ENCODE measurements at regions of chr19 and their contacts with region 1.

Region 1: DNA sequence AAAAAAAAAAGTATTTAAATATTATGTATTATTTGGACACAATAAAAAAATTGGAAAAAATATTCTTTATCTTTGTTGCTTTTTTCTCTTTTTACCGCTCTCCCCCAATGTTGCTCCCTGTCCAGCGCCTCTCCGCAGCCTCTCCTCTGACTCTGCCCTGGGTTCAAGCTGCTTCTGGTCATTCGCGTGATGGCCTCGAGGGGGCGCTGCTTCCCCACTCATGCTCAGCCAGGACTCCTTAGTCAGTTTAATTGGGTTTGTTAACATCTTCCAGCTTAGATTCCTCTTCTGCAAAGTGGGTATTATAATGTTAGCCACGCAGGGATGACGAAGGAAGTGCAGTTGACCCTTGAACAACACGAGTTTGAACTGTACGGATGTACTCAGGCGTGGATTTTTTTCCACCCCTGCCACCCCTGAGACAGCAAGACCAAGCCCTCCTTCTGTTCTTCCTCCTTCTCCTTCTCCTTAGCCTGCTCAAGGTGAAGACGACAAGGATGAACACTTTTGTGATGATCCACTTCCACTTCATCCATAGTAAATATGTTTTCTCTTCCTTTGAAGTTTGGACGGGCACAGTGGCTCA is 4.9 kb upstream of the NWD1 start:
- DNase-seq: peak; percentile 77
- ATAC-seq: peak; percentile 19
- H3K4me3 ChIP-seq: no peak overlapping the region
- H3K4me3 Mint-ChIP-seq: peak overlapping the region; percentile 54
- H3K27ac ChIP-seq: peak overlapping the region in 1 of 2 donors; percentile 8
- H3K27ac Mint-ChIP-seq: peak overlapping the region; percentile 80
- H3K4me1 ChIP-seq: peaks cover 43 to 68% of the 10 kb centered on the region in 2 donors
- H3K4me1 Mint-ChIP-seq: peaks cover 42% of the 10 kb centered on the region
- H3K27me3 ChIP-seq: no peaks in the 10 kb centered on the region
- H3K27me3 Mint-ChIP-seq: no peaks in the 10 kb centered on the region
- CTCF ChIP-seq: peak; percentile 96

Region 2: GRCh38 chr19:16702118-16702517 is 12.7 kb before region 1 on chr19:
- CTCF ChIA-PET with region 1: interaction called, 14 read pairs
- POLR2A ChIA-PET with region 1: interaction called, 8 read pairs
- intact Hi-C with region 1: no loop called
- DNase-seq: no peak
- ATAC-seq: no peak
- H3K4me3 ChIP-seq: no peak overlapping the region
- H3K4me3 Mint-ChIP-seq: no peak overlapping the region
- H3K27ac ChIP-seq: no peak overlapping the region
- H3K27ac Mint-ChIP-seq: no peak overlapping the region
- H3K4me1 ChIP-seq: no peaks in the 10 kb centered on the region
- H3K4me1 Mint-ChIP-seq: no peaks in the 10 kb centered on the region
- H3K27me3 ChIP-seq: no peaks in the 10 kb centered on the region
- H3K27me3 Mint-ChIP-seq: no peaks in the 10 kb centered on the region
- CTCF ChIP-seq: no peak

Region 3: DNA sequence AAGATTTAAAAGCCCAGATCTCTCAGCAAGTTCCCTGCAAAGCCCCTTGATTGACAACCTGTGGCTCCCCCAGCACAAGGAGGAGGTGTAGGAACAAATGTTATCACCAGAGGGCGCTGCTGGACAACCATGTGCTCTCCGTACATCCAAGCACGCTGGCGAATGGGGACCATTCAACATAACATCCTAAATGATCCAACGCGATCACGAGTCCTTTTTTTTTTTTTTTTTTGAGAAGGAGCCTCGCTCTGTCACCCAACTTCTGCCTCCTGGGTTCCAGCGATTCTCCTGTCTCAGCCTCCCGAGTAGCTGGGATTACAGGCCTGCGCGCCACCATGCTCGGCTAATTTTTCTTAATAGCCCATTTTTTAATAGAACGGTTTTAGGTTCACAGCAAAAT is 56.8 kb after region 1 on chr19:
- CTCF ChIA-PET with region 1: interaction called, 34 read pairs
- POLR2A ChIA-PET with region 1: no interaction called
- intact Hi-C with region 1: loop called (anchors 1 kb)
- DNase-seq: peak; percentile 85
- ATAC-seq: peak; percentile 86
- H3K4me3 ChIP-seq: no peak overlapping the region
- H3K4me3 Mint-ChIP-seq: no peak overlapping the region
- H3K27ac ChIP-seq: no peak overlapping the region
- H3K27ac Mint-ChIP-seq: no peak overlapping the region
- H3K4me1 ChIP-seq: no peaks in the 10 kb centered on the region
- H3K4me1 Mint-ChIP-seq: peaks cover 3% of the 10 kb centered on the region
- H3K27me3 ChIP-seq: peaks cover 0 to 5% (median 1%) of the 10 kb centered on the region in 4 experiments
- H3K27me3 Mint-ChIP-seq: peaks cover 17% of the 10 kb centered on the region
- CTCF ChIP-seq: peak; percentile 86

Region 4: DNA sequence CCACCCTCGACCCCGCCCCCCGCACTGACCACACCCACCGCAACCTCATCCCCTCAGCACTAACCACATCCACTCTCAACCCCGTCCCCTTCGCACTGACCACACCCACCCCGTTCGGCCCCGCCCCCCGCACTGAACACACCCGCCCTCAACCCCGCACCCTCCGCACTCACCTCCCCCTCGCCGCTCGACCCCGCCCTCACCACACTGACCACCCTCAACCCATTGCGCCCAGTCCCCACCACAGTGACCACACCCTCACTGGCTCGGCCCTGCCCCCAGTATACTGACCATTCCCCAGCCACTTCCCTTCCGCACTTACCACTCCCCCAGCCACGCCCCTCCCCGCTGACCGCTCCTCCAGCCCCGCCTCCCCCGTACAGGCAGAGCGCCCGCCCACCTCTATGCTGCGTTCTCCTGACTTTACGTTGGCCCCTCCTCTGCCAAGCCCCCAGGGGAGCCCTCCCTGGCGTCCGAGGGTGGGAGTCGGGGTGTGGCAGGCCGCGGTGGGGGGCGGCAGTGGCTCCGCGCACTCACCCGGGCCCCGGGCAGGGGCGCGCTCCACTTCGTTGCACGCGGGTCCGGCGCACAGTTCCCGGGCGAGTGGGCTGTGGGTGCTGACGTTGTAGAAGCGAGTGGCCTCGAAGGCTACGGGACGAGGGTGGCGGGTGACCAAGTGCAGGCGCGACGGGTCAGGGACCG is 182.5 kb after region 1 on chr19:
- CTCF ChIA-PET with region 1: interaction called, 6 read pairs
- POLR2A ChIA-PET with region 1: no interaction called
- intact Hi-C with region 1: loop called (anchors 2 kb)
- DNase-seq: peak; percentile 85
- ATAC-seq: peak; percentile 68
- H3K4me3 ChIP-seq: peak overlapping the region in 4 of 5 experiments; percentile 47 to 84 (median 65)
- H3K4me3 Mint-ChIP-seq: peak overlapping the region; percentile 88
- H3K27ac ChIP-seq: no peak overlapping the region
- H3K27ac Mint-ChIP-seq: peak overlapping the region; percentile 46
- H3K4me1 ChIP-seq: peaks cover 35 to 51% of the 10 kb centered on the region in 2 donors
- H3K4me1 Mint-ChIP-seq: peaks cover 39% of the 10 kb centered on the region
- H3K27me3 ChIP-seq: peaks cover 0 to 11% (median 2%) of the 10 kb centered on the region in 4 experiments
- H3K27me3 Mint-ChIP-seq: no peaks in the 10 kb centered on the region
- CTCF ChIP-seq: no peak

Region 5: GRCh38 chr19:17069218-17069617 is 354.4 kb after region 1 on chr19:
- CTCF ChIA-PET with region 1: no interaction called
- POLR2A ChIA-PET with region 1: no interaction called
- intact Hi-C with region 1: loop called (anchors 5 kb)
- DNase-seq: no peak
- ATAC-seq: no peak
- H3K4me3 ChIP-seq: no peak overlapping the region
- H3K4me3 Mint-ChIP-seq: no peak overlapping the region
- H3K27ac ChIP-seq: no peak overlapping the region
- H3K27ac Mint-ChIP-seq: no peak overlapping the region
- H3K4me1 ChIP-seq: peaks cover 24 to 45% of the 10 kb centered on the region in 2 donors
- H3K4me1 Mint-ChIP-seq: peaks cover 56% of the 10 kb centered on the region
- H3K27me3 ChIP-seq: no peaks in the 10 kb centered on the region
- H3K27me3 Mint-ChIP-seq: no peaks in the 10 kb centered on the region
- CTCF ChIP-seq: no peak

Region 6: DNA sequence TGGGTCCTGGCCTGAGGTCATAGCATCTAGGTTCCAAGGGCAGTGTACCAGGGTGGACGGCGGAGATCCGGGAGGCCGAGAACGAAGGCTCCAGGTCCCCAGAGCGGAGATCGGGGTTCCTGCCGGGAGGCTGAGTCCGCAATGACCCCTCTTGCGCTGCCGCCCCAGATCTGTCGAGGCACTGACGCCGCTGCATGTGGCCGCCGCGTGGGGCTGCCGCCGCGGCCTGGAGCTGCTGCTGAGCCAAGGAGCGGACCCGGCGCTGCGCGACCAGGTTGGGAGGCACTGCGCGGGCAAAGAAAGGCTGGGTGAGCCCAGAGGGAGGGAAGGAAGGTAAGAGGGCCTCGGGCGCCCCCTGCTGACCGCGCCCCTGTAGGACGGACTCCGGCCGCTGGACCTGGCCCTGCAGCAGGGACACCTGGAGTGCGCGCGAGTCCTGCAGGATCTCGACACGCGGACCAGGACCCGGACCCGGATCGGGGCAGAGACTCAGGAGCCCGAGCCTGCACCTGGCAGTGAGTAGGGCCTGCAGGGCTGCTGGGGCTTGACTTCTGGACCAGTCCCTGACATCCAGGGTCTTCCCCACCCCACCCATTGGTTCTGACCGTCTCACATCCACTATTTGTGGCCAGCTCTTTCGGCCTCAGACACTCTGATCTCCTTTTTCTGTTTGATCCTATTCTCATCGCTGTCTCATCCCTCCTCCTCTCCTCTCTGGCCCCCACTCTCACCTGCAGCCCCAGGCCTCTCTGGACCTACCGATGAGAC is 567.9 kb after region 1 on chr19:
- CTCF ChIA-PET with region 1: interaction called, 4 read pairs
- POLR2A ChIA-PET with region 1: interaction called, 4 read pairs
- intact Hi-C with region 1: loop called (anchors 2 kb)
- DNase-seq: peak; percentile 88
- ATAC-seq: peak; percentile 84
- H3K4me3 ChIP-seq: peak overlapping the region; percentile 48 to 92 (median 66)
- H3K4me3 Mint-ChIP-seq: peak overlapping the region; percentile 93
- H3K27ac ChIP-seq: no peak overlapping the region
- H3K27ac Mint-ChIP-seq: peak overlapping the region; percentile 63
- H3K4me1 ChIP-seq: peaks cover 5 to 21% of the 10 kb centered on the region in 2 donors
- H3K4me1 Mint-ChIP-seq: peaks cover 8% of the 10 kb centered on the region
- H3K27me3 ChIP-seq: no peaks in the 10 kb centered on the region
- H3K27me3 Mint-ChIP-seq: no peaks in the 10 kb centered on the region
- CTCF ChIP-seq: peak; percentile 92